ENCODE measurements at regions of chr7 and their contacts with region 1.

Region 1: DNA sequence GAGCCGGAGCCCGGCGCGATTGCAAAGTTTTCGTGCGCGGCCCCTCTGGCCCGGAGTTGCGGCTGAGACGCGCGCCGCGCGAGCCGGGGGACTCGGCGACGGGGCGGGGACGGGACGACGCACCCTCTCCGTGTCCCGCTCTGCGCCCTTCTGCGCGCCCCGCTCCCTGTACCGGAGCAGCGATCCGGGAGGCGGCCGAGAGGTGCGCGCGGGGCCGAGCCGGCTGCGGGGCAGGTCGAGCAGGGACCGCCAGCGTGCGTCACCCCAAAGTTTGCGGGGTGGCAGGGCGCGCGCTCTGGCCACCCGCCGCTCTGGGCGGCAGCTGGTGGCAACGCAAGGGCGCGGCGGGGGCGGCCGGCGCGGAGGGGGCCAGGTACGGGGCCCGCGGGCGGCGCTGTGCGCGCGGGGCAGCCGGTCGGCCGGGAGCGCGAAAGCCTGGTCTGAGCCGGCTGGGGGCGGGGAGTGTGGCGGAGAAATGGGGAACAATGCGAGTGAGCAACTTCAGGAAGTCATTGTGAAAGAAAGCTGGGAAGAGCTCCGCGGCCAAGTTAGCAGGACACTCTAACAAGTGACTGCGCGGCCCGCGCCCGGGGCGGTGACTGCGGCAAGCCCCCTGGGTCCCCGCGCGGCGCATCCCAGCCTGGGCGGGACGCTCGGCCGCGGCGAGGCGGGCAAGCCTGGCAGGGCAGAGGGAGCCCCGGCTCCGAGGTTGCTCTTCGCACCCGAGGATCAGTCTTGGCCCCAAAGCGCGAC is at the start of gene IKZF1:
- DNase-seq: peak; percentile 89
- ATAC-seq: peak; percentile 50
- H3K4me3 ChIP-seq: peak within 1 kb of the TSS; percentile 74 to 99 (median 87)
- H3K4me3 Mint-ChIP-seq: peak within 1 kb of the TSS; percentile 91
- H3K27ac ChIP-seq: peak within 1 kb of the TSS; percentile 71 to 83
- H3K27ac Mint-ChIP-seq: peak within 1 kb of the TSS; percentile 94
- H3K4me1 ChIP-seq: peaks cover 18 to 32% of the 10 kb centered on the region in 2 donors
- H3K4me1 Mint-ChIP-seq: peaks cover 36% of the 10 kb centered on the region
- H3K27me3 ChIP-seq: no peaks in the 10 kb centered on the region
- H3K27me3 Mint-ChIP-seq: no peaks in the 10 kb centered on the region
- CTCF ChIP-seq: peak; percentile 11
- total RNA-seq, gene IKZF1: 254 and 261 TPM in 2 replicates

Region 2: DNA sequence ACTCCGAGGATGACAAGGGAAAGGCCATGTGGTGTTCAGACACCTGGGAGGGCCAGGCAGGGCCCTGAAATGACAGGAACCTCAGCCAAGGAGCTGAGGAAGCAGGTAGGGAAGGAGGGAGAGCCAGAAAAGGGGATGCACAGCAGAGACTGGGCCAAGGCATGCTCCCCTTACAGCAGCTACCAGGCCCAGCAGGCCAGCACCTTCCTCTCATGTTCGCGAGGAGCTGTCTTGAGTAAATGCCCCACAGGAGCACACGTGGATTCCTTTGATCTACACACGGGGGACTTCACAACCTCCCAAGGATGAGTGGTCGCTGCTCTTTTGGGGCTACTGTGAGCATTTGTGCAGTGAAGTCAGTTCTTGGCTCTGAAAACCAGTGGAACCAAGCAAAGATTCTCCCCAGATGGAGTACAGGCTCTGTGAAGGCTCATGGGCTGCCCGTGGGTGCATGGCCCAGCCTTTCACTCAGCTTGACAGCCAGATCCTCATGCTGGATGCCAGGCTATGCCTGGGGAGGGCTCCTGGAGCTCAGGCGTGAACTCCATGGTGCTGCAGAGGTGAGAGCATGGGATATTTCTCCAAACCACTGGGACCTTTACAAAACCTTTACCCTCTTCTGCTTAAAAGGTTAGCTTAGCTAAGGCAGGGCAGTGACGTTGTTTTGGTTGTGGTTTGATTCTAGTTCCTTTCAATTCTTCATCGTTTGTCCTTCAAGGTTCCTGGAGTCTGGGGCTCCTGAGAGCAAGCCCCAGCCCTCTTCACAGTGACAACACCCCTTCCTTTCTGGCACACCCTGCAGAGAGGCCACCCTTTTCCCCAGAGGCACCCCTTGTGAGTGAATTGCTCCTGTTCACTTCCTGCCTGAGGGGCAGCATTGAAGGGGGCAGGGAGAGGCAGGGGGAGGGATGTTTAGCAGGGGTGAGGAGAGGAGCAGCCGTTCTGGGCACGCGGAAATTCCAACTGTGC is 137.1 kb before region 1 on chr7:
- CTCF ChIA-PET with region 1: no interaction called
- POLR2A ChIA-PET with region 1: no interaction called
- intact Hi-C with region 1: no loop called
- DNase-seq: peak; percentile 37
- ATAC-seq: peak; percentile 76
- H3K4me3 ChIP-seq: no peak overlapping the region
- H3K4me3 Mint-ChIP-seq: peak overlapping the region; percentile 49
- H3K27ac ChIP-seq: peak overlapping the region; percentile 13 to 40
- H3K27ac Mint-ChIP-seq: peak overlapping the region; percentile 78
- H3K4me1 ChIP-seq: peaks cover 25 to 26% of the 10 kb centered on the region in 2 donors
- H3K4me1 Mint-ChIP-seq: peaks cover 43% of the 10 kb centered on the region
- H3K27me3 ChIP-seq: no peaks in the 10 kb centered on the region
- H3K27me3 Mint-ChIP-seq: no peaks in the 10 kb centered on the region
- CTCF ChIP-seq: no peak

Region 3: GRCh38 chr7:50266635-50267386 is 37.5 kb before region 1 on chr7:
- CTCF ChIA-PET with region 1: interaction called, 22 read pairs
- POLR2A ChIA-PET with region 1: interaction called, 12 read pairs
- intact Hi-C with region 1: loop called (anchors 2 kb)
- DNase-seq: peak; percentile 58
- ATAC-seq: peak; percentile 83
- H3K4me3 ChIP-seq: peak overlapping the region in 4 of 5 experiments; percentile 20 to 55 (median 31)
- H3K4me3 Mint-ChIP-seq: peak overlapping the region; percentile 73
- H3K27ac ChIP-seq: peak overlapping the region; percentile 57 to 71
- H3K27ac Mint-ChIP-seq: peak overlapping the region; percentile 95
- H3K4me1 ChIP-seq: peaks cover 94% of the 10 kb centered on the region in 2 donors
- H3K4me1 Mint-ChIP-seq: peaks cover 92% of the 10 kb centered on the region
- H3K27me3 ChIP-seq: no peaks in the 10 kb centered on the region
- H3K27me3 Mint-ChIP-seq: no peaks in the 10 kb centered on the region
- CTCF ChIP-seq: no peak

Region 4: DNA sequence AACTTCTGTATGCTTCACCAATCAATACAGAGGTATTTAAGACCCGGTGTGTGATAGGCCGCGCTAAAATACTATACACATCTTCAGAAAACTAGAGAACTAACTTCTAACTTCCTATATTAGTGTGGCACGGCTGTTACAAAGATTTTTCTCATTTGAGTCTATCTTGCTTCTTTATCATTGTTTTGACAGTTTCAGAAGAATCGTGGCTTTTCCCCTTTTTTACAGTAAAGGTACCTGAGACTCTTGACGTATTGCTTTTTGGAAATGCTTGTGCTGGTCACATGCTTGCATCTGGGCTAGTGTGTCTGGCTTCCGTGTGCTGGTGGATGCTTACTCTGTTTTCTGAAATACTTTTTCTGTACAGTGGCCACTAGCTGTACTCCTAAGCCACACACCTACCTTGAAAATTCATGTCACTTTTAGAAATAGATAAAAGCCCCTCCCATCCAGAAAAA is 12.9 kb after region 1 on chr7:
- CTCF ChIA-PET with region 1: interaction called, 49 read pairs
- POLR2A ChIA-PET with region 1: interaction called, 10 read pairs
- intact Hi-C with region 1: loop called (anchors 1 kb)
- DNase-seq: peak; percentile 86
- ATAC-seq: peak; percentile 74
- H3K4me3 ChIP-seq: peak overlapping the region in 1 of 5 experiments; percentile 37
- H3K4me3 Mint-ChIP-seq: peak overlapping the region; percentile 73
- H3K27ac ChIP-seq: peak overlapping the region; percentile 54 to 83
- H3K27ac Mint-ChIP-seq: peak overlapping the region; percentile 96
- H3K4me1 ChIP-seq: peaks cover 81 to 86% of the 10 kb centered on the region in 2 donors
- H3K4me1 Mint-ChIP-seq: peaks cover 93% of the 10 kb centered on the region
- H3K27me3 ChIP-seq: no peaks in the 10 kb centered on the region
- H3K27me3 Mint-ChIP-seq: no peaks in the 10 kb centered on the region
- CTCF ChIP-seq: peak; percentile 32

Region 5: DNA sequence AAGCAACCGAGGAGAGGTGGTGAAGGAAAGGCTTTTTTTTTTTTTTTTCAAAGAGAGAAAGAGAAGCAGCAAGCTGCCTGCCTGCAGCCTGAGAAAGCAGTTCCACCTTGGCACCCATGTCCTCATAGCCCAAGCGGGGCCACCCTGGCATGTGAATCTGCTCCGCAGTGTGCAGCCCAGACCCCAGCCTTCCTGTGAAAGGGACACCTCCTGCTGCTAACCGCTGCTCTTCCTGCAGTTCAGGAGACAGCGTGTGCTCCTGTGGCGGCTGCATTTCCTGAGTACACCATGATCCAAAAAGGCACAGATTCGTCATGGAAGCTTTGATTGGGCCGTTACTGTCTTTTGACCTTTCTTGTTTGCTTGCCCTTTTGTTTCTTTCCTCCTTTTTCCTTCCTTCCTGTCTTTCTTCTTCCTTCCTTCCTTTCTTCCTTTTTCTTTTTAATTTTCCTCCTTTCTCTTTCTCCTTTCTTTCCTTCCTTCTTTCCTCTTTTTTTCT is 38.3 kb after region 1 on chr7:
- CTCF ChIA-PET with region 1: interaction called, 17 read pairs
- POLR2A ChIA-PET with region 1: interaction called, 7 read pairs
- intact Hi-C with region 1: loop called (anchors 1 kb)
- DNase-seq: peak; percentile 39
- ATAC-seq: no peak
- H3K4me3 ChIP-seq: no peak overlapping the region
- H3K4me3 Mint-ChIP-seq: peak overlapping the region; percentile 74
- H3K27ac ChIP-seq: peak overlapping the region; percentile 46 to 95
- H3K27ac Mint-ChIP-seq: peak overlapping the region; percentile 92
- H3K4me1 ChIP-seq: peaks cover 64 to 79% of the 10 kb centered on the region in 2 donors
- H3K4me1 Mint-ChIP-seq: peaks cover 68% of the 10 kb centered on the region
- H3K27me3 ChIP-seq: no peaks in the 10 kb centered on the region
- H3K27me3 Mint-ChIP-seq: no peaks in the 10 kb centered on the region
- CTCF ChIP-seq: no peak

Region 6: DNA sequence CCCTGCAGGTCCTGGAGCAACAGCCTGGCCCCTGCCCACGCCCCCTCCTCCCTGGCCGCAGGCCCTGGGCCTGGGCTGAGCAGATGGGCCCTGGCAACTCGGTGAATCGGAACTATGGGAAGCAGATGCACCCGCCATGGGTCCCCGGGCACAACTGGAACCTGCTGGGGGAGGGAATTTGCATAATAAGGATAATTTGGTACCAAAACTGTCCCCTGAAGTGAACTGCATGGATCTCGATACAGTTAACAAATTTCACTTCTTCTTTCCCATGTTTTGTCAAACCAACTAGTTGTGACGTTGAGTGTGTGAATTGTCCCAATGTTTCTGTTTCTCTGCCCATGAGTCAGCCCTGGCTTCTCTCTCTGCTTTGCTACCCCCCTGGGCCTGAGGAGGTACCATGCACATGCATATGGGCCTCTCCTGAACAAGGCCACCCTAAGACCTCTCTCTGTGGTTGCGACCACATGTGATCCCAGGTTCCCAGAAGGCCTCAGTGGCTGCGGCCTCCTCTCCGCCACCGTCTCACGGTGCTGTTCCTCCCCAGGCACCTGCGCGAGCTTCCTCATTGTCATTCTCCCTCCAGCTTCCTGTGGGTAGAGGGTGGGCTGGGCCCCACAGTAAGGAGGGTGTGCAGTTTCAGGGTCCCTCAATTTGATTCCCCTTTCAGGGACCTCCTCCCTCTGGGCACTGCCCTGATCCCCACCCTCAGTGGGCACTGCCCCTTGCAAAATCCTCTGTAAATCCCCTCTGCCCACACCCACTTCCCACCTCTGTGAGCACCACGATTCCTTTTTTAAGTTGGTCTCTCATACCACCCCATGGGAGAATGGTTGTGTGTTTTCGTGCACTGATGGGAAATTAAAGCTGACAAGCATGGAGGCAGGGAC is 105.8 kb after region 1 on chr7:
- CTCF ChIA-PET with region 1: interaction called, 5 read pairs
- POLR2A ChIA-PET with region 1: interaction called, 6 read pairs
- intact Hi-C with region 1: loop called (anchors 5 kb)
- DNase-seq: peak; percentile 87
- ATAC-seq: peak; percentile 63
- H3K4me3 ChIP-seq: no peak overlapping the region
- H3K4me3 Mint-ChIP-seq: peak overlapping the region; percentile 83
- H3K27ac ChIP-seq: peak overlapping the region; percentile 90 to 94
- H3K27ac Mint-ChIP-seq: peak overlapping the region; percentile 99
- H3K4me1 ChIP-seq: peaks cover 97% of the 10 kb centered on the region in 2 donors
- H3K4me1 Mint-ChIP-seq: peaks cover 95% of the 10 kb centered on the region
- H3K27me3 ChIP-seq: no peaks in the 10 kb centered on the region
- H3K27me3 Mint-ChIP-seq: no peaks in the 10 kb centered on the region
- CTCF ChIP-seq: no peak